ENCODE measurements at regions of chr5 and their contacts with region 1.

Region 1: DNA sequence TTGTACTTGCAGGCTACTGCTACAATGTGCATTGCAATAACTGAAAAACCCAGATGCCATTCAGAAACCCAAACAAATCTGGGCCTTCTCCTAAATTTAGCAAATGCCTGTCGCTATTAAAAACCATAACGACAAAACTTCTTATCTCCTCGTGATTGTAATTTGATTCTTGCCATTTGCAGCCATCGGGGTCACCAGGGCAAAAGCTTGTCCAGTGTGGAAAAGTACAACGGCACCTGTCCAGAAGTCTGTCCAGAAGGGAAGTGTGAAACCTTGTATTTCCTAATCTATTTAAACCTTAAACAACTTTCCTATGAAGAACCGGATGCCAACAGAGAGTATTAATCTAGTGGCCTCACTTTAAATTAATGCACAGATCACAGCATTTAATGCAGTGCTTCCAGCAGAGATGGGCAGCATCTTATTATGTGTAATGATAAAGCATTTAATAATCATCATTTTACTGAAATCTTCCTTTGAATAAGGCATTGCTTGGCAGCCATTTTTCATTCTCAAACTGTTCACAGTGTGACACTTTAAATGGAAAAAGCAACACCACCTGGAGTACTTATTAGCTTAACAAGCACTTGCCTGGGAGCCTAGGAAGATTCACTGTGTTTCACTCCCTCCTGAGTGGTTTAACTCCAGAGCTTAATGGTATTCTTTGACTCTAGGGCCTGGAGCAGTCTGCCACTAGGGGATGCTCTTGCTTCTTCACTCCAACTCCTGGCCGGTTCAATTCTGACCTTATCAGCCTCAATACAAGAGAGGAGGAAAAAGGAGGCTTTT is 4.9 kb upstream of the C7 start:
- DNase-seq: peak in 2 of 3 donors; percentile 43 to 87
- ATAC-seq: peak; percentile 87
- H3K4me3 ChIP-seq: no peak overlapping the region
- H3K4me1 ChIP-seq: peaks cover 3% of the 10 kb centered on the region
- CTCF ChIP-seq: peak; percentile 87

Region 2: GRCh38 chr5:41270423-41271251 is 366.2 kb after region 1 on chr5:
- intact Hi-C with region 1: loop called in 1 of 2 experiments (anchors 10 kb)
- DNase-seq: peak in 1 of 3 donors; percentile 48
- ATAC-seq: peak; percentile 84
- H3K4me3 ChIP-seq: no peak overlapping the region
- H3K4me1 ChIP-seq: no peaks in the 10 kb centered on the region
- CTCF ChIP-seq: no peak

Region 3: DNA sequence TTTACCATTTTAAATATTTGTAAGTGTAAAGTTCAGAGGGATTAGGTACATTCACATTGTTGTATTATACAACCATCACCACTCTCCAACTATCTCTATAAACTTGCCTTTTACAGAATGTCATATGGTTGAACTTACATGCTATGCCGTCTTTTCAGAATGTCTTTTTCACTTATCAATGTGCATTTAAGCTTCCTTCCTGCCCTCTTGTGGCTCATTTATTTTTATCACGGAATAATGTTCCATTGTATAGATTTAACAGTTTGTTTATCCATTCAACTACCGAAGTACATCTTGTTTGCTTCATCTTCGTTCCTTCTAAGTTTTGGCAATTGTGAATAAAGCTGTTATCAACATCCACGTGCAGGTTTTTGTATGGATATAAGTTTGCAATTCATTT is 442.2 kb after region 1 on chr5:
- intact Hi-C with region 1: loop called in 1 of 2 experiments (anchors 5 kb)
- DNase-seq: no peak
- ATAC-seq: no peak
- H3K4me3 ChIP-seq: no peak overlapping the region
- H3K4me1 ChIP-seq: no peaks in the 10 kb centered on the region
- CTCF ChIP-seq: no peak

Measured in mucosa of descending colon (tissue), 3 donors.